A549 (cell line): ENCODE measurements at regions of chr1 and their contacts with region 1.

Region 1: GRCh38 chr1:153775458-153776327 is 486 bp downstream of the SLC27A3 start:
- DNase-seq: peak; percentile 26 to 39
- ATAC-seq: peak; percentile 51 to 77; a peak in 5 of 6 replicates
- H3K4me3 ChIP-seq: peak overlapping the region; percentile 52
- H3K27ac ChIP-seq: peak overlapping the region; percentile 13 to 71; a peak in 3 of 6 replicates
- H3K4me1 ChIP-seq: peaks cover 5% of the 10 kb centered on the region; the same call in 1 of the 3 replicates
- CTCF ChIP-seq: no peak
- EP300 ChIP-seq: no peak
- POLR2A ChIP-seq: no peak
- RAD21 ChIP-seq: no peak

Region 2: DNA sequence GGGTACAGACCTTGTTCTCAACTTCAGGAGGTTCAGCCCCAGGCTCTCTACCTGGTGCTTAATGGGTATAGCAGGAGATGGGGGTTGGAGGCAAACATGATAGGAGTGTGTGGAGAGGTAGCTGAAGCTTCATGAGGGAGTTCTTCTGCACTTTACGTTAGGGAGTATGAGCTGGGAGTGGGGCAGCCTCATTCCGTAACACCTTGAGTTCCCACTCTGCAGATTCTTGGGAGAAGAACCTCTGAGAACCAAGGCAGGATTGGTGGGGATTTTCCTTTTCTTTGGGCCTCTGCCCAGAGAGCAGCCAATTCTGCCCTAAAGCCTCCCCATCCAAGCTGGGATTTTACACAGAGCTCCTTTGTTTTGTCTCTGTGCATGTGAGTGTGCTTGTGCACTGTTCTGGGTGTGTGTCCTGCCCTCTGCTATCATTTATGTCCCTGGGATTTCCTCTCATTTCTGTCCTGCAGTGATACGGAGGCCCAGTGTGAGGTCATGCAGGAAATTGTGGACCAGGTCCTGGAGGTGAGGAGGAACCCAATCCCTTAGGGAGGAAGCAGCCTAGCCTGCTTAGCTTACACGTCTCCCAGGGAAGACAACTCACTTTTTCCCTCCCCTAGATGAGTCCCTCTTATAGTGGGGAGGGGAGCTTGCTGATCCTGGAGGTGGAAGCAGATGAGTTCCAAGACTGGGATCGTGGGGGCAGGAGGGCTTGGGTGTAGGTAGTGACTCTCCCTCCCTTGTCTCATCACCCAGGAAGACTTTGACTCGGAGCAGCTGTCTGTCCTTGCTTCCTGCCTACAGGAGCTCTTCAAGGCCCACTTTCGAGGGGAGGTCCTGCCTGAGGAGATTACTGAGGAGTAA is 12.1 kb before region 1 on chr1:
- CTCF ChIA-PET with region 1: interaction called, 33 read pairs
- POLR2A ChIA-PET with region 1: no interaction called
- DNase-seq: no peak
- ATAC-seq: no peak
- H3K4me3 ChIP-seq: no peak overlapping the region
- H3K27ac ChIP-seq: no peak overlapping the region
- H3K4me1 ChIP-seq: no peaks in the 10 kb centered on the region
- CTCF ChIP-seq: no peak
- EP300 ChIP-seq: no peak
- POLR2A ChIP-seq: no peak
- RAD21 ChIP-seq: no peak